ENCODE measurements at regions of chr1 and their contacts with region 1.

Region 1: GRCh38 chr1:112061901-112062320 is 72.4 kb upstream of the KCND3 start:
- DNase-seq: no peak
- ATAC-seq: no peak
- H3K4me3 Mint-ChIP-seq: no peak overlapping the region
- H3K27ac Mint-ChIP-seq: no peak overlapping the region
- H3K4me1 Mint-ChIP-seq: peaks cover 19% of the 10 kb centered on the region
- H3K27me3 Mint-ChIP-seq: no peaks in the 10 kb centered on the region; the same call in 1 of the 2 replicates
- CTCF ChIP-seq: no peak

Region 2: DNA sequence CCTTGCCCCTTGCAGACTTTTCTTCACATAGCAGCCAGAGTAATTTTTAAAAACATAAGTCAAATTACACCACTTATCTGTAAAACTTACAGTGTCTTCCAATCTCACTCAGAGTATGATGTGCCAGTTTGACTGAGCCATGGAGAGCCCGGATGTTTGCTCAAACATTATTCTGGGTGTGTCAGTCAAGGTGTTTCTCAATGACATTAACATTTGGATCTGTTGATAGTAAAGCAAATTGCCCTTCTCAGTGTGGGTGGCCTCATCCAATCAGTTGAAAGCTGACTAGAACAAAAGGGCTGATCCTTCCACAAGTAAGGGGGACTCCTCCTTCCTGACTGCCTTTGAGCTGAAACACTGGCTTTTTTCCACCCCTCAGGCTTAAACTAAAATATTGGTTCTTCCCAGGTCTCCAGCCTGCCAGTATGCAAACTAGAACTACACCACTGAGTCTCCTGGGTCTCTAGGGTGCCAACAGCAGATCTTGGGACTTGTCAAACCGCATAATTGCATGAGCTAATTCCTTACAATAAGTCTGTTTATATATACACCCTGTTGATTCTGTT is 176.2 kb after region 1 on chr1:
- CTCF ChIA-PET with region 1: no interaction called
- POLR2A ChIA-PET with region 1: interaction called, 13 read pairs
- DNase-seq: no peak
- ATAC-seq: peak; percentile 82
- H3K4me3 Mint-ChIP-seq: no peak overlapping the region
- H3K27ac Mint-ChIP-seq: no peak overlapping the region; the same call in 1 of the 2 replicates
- H3K4me1 Mint-ChIP-seq: peaks cover 40% of the 10 kb centered on the region
- H3K27me3 Mint-ChIP-seq: no peaks in the 10 kb centered on the region; the same call in 1 of the 2 replicates
- CTCF ChIP-seq: no peak